ENCODE measurements at regions of chr14 and their contacts with region 1.

Region 1: DNA sequence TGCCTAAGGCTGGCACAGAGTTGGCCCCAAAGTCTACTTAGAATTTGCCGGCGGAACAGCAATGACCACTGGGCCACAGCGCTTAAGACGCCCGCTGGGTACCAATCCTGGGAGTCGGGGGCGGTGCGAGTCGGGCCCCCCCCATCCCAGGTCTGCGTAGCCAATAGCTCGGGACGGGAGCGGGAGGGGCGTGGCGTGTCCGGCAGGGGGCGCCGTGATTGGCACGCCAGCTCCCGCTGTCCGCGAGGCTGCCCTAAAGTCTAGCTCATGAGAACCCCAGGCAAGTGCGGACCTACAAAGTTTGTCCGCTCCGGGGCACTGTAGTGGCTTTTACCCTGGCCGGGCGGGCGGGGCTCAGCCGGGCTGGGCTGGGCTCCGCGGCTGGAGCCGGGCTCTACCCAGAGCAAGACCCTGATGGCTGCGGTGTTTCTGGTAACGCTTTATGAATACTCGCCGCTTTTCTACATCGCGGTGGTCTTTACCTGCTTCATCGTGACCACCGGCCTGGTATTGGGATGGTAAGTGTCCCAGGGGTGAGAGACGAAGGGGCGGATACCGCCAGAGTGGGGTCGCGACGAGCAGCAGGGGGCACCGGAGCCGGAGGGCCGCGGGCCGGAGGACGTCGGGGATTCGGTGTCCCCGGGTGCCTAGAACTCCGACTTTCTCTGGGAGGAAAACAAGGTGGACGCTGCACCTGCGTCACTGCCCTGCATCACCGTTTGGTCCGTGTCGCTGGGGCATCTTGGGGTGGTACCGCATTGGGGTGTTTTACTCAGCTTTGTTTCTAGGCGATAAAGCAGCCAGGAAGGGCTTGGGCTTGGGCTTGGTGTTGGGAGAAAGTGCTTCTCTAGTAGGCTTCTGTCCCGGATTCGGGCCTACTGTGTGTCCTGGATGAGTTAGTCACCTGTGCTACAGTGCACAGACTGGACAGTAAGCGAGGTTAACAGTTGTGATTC is at the start of gene CGRRF1:
- DNase-seq: peak; percentile 93 to 99
- H3K4me3 ChIP-seq: peak within 1 kb of the TSS; percentile 91 to 95
- H3K27ac ChIP-seq: peak within 1 kb of the TSS; percentile 88
- H3K4me1 ChIP-seq: peaks cover 0 to 15% of the 10 kb centered on the region in 2 donors
- H3K27me3 ChIP-seq: no peaks in the 10 kb centered on the region
- CTCF ChIP-seq: peak; percentile 44 to 64 (median 54)
- total RNA-seq, gene CGRRF1: 1.2 TPM

Region 2: DNA sequence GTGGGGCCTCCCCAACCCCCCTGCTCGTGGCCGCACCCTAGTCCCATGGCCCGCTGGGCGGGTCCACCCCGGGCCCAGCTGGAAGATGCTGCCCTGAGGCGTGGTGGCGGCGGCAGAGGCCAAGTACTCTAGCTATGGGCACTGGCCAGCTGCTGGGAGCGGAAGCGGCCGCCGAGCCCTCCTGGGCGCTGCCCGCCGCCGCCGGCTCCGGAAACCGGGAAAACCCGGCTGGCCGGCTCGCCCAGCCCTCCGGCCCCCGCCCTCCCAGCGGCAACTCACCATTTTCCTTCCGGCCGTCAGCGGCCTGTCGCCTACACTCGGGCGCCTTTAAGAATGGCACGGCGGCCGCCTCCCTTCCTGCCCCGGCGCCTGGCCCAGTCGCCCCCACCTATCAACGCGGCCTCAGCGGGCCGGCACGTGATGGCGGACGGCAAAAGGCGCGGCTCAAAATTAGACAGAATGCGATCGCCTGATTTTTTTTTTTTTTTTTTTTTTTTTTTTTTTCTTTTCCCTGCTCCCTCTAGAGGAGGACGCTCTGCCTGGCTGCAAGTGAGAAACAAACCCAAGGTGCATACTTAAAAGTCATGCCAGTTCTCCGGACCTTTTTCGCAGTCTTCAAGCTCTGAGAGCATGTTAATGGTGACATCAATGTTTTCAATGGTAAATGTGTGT is 21.0 kb before region 1 on chr14 and contains the start of gene GMFB:
- intact Hi-C with region 1: loop called (anchors 1 kb)
- DNase-seq: peak; percentile 74 to 95
- H3K4me3 ChIP-seq: peak within 1 kb of the TSS; percentile 74 to 84
- H3K27ac ChIP-seq: peak within 1 kb of the TSS; percentile 96 to 99
- H3K4me1 ChIP-seq: peaks cover 0 to 22% of the 10 kb centered on the region in 2 donors
- H3K27me3 ChIP-seq: no peaks in the 10 kb centered on the region
- CTCF ChIP-seq: peak in 2 of 3 experiments; percentile 33 to 45
- total RNA-seq, gene GMFB: 27.5 TPM

Region 3: GRCh38 chr14:54782751-54783679 is 273.2 kb after region 1 on chr14:
- intact Hi-C with region 1: loop called (anchors 5 kb)
- DNase-seq: peak in 1 of 2 donors; percentile 73
- H3K4me3 ChIP-seq: no peak overlapping the region
- H3K27ac ChIP-seq: peak overlapping the region; percentile 78 to 91
- H3K4me1 ChIP-seq: peaks cover 11 to 21% of the 10 kb centered on the region in 2 donors
- H3K27me3 ChIP-seq: no peaks in the 10 kb centered on the region
- CTCF ChIP-seq: no peak

Region 4: DNA sequence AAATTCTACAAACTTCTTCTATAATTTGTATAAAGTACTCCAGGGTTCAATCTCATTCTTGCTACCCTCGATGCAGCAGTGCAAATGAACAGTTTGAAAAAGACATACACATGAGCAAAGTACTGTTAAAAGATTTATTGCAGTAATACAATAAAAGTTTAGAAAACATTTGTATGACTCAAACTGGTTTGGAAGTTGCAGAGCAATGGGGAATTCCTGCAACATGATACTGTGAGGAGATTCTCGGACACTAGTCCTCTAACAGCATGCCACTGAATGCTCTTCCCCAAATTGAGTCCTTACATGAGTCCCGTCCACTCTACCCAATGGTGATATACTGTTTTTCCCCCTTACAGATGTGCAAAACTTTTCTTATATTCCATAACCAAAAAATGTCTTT is 856.4 kb after region 1 on chr14:
- intact Hi-C with region 1: no loop called
- DNase-seq: no peak
- H3K4me3 ChIP-seq: no peak overlapping the region
- H3K27ac ChIP-seq: no peak overlapping the region
- H3K4me1 ChIP-seq: no peaks in the 10 kb centered on the region
- H3K27me3 ChIP-seq: no peaks in the 10 kb centered on the region
- CTCF ChIP-seq: no peak

Measured in ascending aorta (tissue), 2 donors.